PC-9 (cell line): ENCODE measurements at regions of chr16 and their contacts with region 1.

Region 1: DNA sequence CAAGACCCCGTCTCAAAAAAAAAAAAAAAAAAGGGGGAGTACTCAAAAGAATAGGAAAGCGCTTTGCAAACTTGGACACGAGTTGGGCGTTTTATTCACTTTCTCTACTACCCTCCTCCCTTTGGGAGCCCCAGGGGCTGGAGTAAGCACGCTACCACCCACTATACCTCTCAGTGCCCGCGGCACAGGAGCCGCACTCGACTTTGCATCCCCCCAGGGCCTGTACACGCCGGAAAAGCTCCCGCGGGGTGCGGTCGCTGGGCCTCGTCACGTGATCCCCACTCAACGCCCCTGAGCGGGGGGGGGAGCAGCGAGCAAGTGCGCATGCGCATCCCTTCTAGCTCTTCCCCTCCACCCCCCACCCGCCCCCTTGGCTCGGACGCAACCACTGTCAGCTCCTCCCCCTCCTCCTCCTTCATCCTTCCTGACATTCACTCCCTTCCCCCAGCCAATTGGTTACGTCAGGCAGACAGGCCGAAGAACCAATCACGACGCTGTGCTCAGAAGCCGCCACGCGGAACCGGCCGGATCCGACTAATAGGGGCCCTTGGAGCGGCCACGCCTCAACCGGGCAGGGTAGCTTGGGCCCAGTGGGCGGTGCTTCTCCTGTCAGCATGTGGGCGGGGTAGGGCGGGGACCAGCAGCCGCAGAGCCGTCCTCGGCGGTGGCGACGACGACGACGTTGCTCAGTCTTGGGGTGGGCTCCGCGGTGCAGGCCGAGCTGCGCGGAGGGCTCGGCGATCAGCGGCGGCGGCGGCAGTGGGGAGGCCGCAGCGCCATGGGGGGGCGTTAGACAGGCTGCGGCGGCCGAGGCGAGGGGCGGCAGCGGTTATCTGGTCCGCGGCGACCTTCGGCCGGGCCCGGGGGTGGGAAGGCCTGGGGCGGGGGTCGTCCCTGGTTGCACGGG is at the start of gene HAPSTR1:
- DNase-seq: peak; percentile 98 to 99
- H3K4me3 ChIP-seq: peak within 1 kb of the TSS; percentile 96
- H3K27ac ChIP-seq: peak within 1 kb of the TSS; percentile 66
- H3K4me1 ChIP-seq: peaks cover 24% of the 10 kb centered on the region
- H3K27me3 ChIP-seq: no peaks in the 10 kb centered on the region
- CTCF ChIP-seq: no peak
- total RNA-seq, gene HAPSTR1: 61.1 and 82.8 TPM in 2 replicates

Region 2: DNA sequence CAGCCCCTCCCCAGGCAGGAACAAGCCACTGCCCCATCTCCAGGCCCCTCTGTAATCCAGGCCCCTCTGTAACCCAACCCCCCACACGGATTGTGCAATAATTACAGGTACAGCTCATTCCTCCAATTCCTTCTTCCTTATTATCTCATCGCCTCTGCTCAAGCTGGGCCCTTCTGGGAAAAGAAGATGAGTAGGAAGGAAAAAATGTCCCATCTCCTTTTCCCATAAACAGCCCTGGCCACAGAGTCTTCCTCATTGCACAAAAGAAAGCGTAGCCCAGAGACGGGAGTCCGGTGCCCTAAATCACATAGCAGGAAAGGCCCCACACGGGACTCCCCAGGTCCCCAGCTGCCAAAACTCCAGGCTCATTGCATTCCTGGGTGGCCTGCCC is 212.7 kb before region 1 on chr16:
- CTCF ChIA-PET with region 1: no interaction called
- POLR2A ChIA-PET with region 1: no interaction called
- intact Hi-C with region 1: loop called (anchors 10 kb)
- DNase-seq: peak; percentile 70 to 81
- H3K4me3 ChIP-seq: no peak overlapping the region; the same call in 1 of the 2 replicates
- H3K27ac ChIP-seq: peak overlapping the region; percentile 76
- H3K4me1 ChIP-seq: peaks cover 23% of the 10 kb centered on the region
- H3K27me3 ChIP-seq: no peaks in the 10 kb centered on the region
- CTCF ChIP-seq: no peak

Region 3: GRCh38 chr16:8986111-8986510 is 105.1 kb before region 1 on chr16:
- CTCF ChIA-PET with region 1: no interaction called
- POLR2A ChIA-PET with region 1: no interaction called
- intact Hi-C with region 1: no loop called
- DNase-seq: no peak
- H3K4me3 ChIP-seq: no peak overlapping the region
- H3K27ac ChIP-seq: no peak overlapping the region
- H3K4me1 ChIP-seq: 0 out of 2 replicates have a peak, but pooled peaks cover 3% of the 10 kb centered on the region
- H3K27me3 ChIP-seq: no peaks in the 10 kb centered on the region
- CTCF ChIP-seq: no peak

Region 4: DNA sequence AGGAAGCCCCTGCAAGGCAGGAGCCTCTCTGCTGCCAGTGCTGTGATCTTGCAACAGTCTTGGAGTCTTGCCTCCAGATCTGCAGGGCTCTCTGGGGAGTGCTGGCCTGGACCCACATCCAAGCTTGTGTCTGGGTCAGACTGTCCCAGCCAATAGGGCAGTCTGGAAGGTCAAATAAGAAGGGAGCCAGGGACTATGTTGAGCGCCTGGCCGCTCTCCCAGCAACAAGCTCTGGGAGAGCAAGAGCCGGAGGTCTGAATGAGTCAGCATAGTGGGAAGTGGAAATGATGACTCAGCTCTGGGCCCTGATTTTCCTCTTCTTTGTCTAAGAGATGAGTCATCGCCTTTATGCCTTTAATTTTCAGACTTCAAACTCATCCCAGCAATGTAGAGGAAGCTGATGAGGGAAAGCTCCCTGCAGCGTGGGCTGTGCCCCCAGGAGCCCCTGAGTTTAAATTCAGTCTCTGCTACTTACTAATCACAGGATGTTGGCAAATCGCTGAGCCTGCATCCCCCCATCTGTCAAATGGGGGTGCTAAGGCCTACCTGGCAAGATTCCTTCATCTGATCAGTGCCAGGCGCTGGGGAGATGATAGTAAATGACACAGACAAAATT is 43.4 kb before region 1 on chr16:
- CTCF ChIA-PET with region 1: interaction called, 3 read pairs
- POLR2A ChIA-PET with region 1: interaction called, 12 read pairs
- intact Hi-C with region 1: loop called (anchors 5 kb)
- DNase-seq: peak; percentile 85 to 91
- H3K4me3 ChIP-seq: no peak overlapping the region
- H3K27ac ChIP-seq: peak overlapping the region; percentile 83
- H3K4me1 ChIP-seq: peaks cover 17% of the 10 kb centered on the region
- H3K27me3 ChIP-seq: no peaks in the 10 kb centered on the region
- CTCF ChIP-seq: no peak

Region 5: GRCh38 chr16:9077091-9077809 is 14.0 kb before region 1 on chr16:
- CTCF ChIA-PET with region 1: interaction called, 9 read pairs
- POLR2A ChIA-PET with region 1: interaction called, 11 read pairs
- intact Hi-C with region 1: loop called (anchors 1 kb)
- DNase-seq: peak; percentile 63 to 78
- H3K4me3 ChIP-seq: no peak overlapping the region
- H3K27ac ChIP-seq: peak overlapping the region; percentile 83
- H3K4me1 ChIP-seq: peaks cover 50% of the 10 kb centered on the region
- H3K27me3 ChIP-seq: no peaks in the 10 kb centered on the region
- CTCF ChIP-seq: no peak